ENCODE measurements at regions of chr20 and their contacts with region 1.

Region 1: DNA sequence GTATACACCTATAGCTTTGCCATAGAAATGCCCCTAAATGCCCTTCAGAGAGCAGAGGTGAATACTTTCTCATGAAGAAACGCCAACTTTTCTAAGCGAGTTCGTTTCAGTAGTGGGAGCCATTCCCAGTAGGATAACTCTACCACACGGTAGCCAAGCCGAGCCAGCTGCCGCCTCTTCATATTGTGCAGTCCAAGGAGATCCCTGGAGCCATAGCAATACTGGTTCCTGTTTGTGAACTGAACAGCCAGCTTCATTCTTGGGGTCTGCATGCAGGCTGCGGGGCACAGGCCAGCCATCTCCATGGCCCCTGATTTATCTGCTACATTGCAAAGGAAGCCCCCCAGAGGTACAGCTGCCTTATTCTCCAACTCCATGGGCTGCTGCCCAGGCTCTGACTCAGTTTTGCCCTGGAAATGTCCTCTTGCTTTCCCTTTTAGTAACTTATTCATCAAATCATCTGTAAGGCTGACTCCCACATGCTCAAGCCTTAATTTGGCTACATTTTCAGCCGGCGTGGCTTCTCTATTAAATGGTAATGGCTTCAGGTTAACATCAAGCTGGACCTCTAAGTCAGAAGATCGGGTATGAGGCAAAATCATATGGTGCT is 12.8 kb downstream of the FASTKD5 start:
- DNase-seq: no peak
- ATAC-seq: no peak
- H3K4me3 ChIP-seq: no peak overlapping the region
- H3K27ac ChIP-seq: no peak overlapping the region
- H3K4me1 ChIP-seq: no peaks in the 10 kb centered on the region; a peak in 1 of 5 replicates
- H3K27me3 ChIP-seq: no peaks in the 10 kb centered on the region
- CTCF ChIP-seq: no peak
- EP300 ChIP-seq: no peak
- POLR2A ChIP-seq: no peak
- RAD21 ChIP-seq: no peak

Region 2: GRCh38 chr20:2932498-2932897 is 214.3 kb before region 1 on chr20:
- CTCF ChIA-PET with region 1: no interaction called
- POLR2A ChIA-PET with region 1: no interaction called
- in situ Hi-C with region 1: no loop called
- intact Hi-C with region 1: no loop called
- DNase-seq: no peak
- ATAC-seq: no peak; the same call in 2 of the 3 replicates
- H3K4me3 ChIP-seq: no peak overlapping the region
- H3K27ac ChIP-seq: no peak overlapping the region
- H3K4me1 ChIP-seq: no peaks in the 10 kb centered on the region
- H3K27me3 ChIP-seq: no peaks in the 10 kb centered on the region
- CTCF ChIP-seq: no peak
- EP300 ChIP-seq: no peak
- POLR2A ChIP-seq: no peak
- RAD21 ChIP-seq: no peak

Region 3: GRCh38 chr20:3156811-3157619 is 10.2 kb after region 1 on chr20:
- CTCF ChIA-PET with region 1: no interaction called
- POLR2A ChIA-PET with region 1: interaction called, 42 read pairs
- in situ Hi-C with region 1: no loop called
- intact Hi-C with region 1: no loop called
- DNase-seq: no peak
- ATAC-seq: peak; percentile 9; the same call in 1 of the 3 replicates
- H3K4me3 ChIP-seq: peak overlapping the region; percentile 33
- H3K27ac ChIP-seq: peak overlapping the region; percentile 46
- H3K4me1 ChIP-seq: peaks cover 13 to 17% of the 10 kb centered on the region in 2 experiments; a peak in 4 of 5 replicates
- H3K27me3 ChIP-seq: no peaks in the 10 kb centered on the region
- CTCF ChIP-seq: no peak
- EP300 ChIP-seq: no peak
- POLR2A ChIP-seq: no peak
- RAD21 ChIP-seq: no peak